PC-9 (cell line): ENCODE measurements at regions of chr10 and their contacts with region 1.

Region 1: GRCh38 chr10:91908337-91909116 is 759 bp downstream of the FGFBP3 start:
- DNase-seq: peak; percentile 71 to 74
- H3K4me3 ChIP-seq: peak overlapping the region; percentile 72
- H3K27ac ChIP-seq: no peak overlapping the region
- H3K4me1 ChIP-seq: peaks cover 7% of the 10 kb centered on the region
- H3K27me3 ChIP-seq: no peaks in the 10 kb centered on the region
- CTCF ChIP-seq: no peak; the same call in 1 of the 2 replicates

Region 2: GRCh38 chr10:90885176-90885575 is 1023.4 kb before region 1 on chr10:
- CTCF ChIA-PET with region 1: no interaction called
- POLR2A ChIA-PET with region 1: no interaction called
- intact Hi-C with region 1: loop called (anchors 10 kb)
- DNase-seq: no peak
- H3K4me3 ChIP-seq: no peak overlapping the region
- H3K27ac ChIP-seq: 0 out of 2 replicates have a peak overlapping the region, but pooled peaks have one; percentile 29
- H3K4me1 ChIP-seq: peaks cover 12% of the 10 kb centered on the region
- H3K27me3 ChIP-seq: no peaks in the 10 kb centered on the region
- CTCF ChIP-seq: no peak

Region 3: GRCh38 chr10:91409869-91410637 is 498.5 kb before region 1 on chr10 and contains the start of gene HECTD2:
- CTCF ChIA-PET with region 1: no interaction called
- POLR2A ChIA-PET with region 1: no interaction called
- intact Hi-C with region 1: loop called (anchors 2 kb)
- DNase-seq: peak; percentile 35 to 72
- H3K4me3 ChIP-seq: peak within 1 kb of the TSS; percentile 70
- H3K27ac ChIP-seq: peak within 1 kb of the TSS; percentile 74
- H3K4me1 ChIP-seq: peaks cover 4% of the 10 kb centered on the region; the same call in 1 of the 2 replicates
- H3K27me3 ChIP-seq: no peaks in the 10 kb centered on the region
- CTCF ChIP-seq: no peak; the same call in 1 of the 2 replicates
- total RNA-seq, gene HECTD2: 3.2 and 5.2 TPM in 2 replicates

Region 4: DNA sequence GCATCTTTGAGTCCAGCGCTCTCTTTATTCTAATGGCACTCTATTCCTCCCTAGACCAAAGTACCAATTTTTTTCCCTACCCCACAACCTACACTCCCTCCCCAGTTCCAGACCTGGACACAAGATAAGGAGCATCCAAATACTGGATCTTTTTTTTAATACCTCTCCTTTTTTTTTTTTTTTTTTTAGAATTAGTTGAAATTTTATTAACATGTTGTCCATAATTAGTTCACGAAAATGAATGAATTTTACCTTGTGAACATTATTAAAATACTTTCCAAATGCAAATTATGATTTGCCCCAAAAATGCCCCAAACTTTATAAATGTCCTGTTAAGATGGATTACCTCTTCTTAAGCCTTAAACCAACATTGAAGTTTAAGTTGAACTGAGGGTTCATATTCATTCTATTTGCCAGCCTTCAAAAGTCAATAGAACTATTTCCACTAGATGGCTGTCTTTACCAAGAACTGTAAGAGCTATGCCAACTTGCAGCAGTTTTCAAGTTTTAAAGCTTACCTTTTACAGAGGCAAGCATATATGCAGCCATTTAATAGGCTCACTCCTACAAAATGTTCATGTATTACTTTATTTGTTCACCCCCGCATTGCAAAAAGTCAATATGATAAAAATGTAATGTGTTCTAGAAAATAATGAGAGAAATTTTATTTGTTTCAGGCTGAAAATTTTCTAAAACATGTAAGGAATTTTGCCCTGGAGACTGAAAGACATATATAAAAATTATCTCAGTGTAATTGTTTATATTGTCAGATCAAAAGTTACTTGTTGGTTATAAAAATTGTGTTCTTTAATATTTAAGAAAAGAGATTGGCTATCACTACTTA is 150.0 kb before region 1 on chr10:
- CTCF ChIA-PET with region 1: interaction called, 3 read pairs
- POLR2A ChIA-PET with region 1: no interaction called
- intact Hi-C with region 1: loop called (anchors 2 kb)
- DNase-seq: peak in 1 of 2 experiments; percentile 60
- H3K4me3 ChIP-seq: no peak overlapping the region
- H3K27ac ChIP-seq: no peak overlapping the region
- H3K4me1 ChIP-seq: peaks cover 9% of the 10 kb centered on the region
- H3K27me3 ChIP-seq: no peaks in the 10 kb centered on the region
- CTCF ChIP-seq: peak; percentile 71

Region 5: DNA sequence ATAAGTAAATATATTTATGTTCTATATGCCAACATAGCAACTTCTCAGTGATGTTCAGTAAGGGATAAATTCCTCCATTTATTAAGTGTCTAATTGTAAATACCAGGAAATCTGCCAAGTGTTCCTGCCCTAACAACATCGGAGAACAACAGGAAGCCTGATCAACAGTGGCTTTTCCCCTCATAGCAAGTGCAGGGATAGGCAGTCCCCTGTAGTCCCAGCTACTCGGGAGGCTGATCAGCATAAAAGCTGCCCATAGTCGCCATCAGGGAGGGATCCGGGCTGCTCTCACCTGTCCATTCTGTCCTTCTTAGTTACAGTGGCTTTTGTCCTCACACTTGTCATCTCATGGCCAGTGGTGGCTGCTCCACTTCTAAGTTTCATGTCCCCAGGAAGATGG is 524.1 kb after region 1 on chr10:
- CTCF ChIA-PET with region 1: no interaction called
- POLR2A ChIA-PET with region 1: no interaction called
- intact Hi-C with region 1: loop called (anchors 10 kb)
- DNase-seq: no peak
- H3K4me3 ChIP-seq: no peak overlapping the region
- H3K27ac ChIP-seq: no peak overlapping the region
- H3K4me1 ChIP-seq: no peaks in the 10 kb centered on the region
- H3K27me3 ChIP-seq: no peaks in the 10 kb centered on the region
- CTCF ChIP-seq: no peak